ENCODE measurements at regions of chr11 and their contacts with region 1.

Region 1: GRCh38 chr11:7986768-7987559 is at the start of gene EIF3F:
- DNase-seq: peak; percentile 79 to 99 (median 88)
- ATAC-seq: peak; percentile 96
- H3K4me3 ChIP-seq: peak within 1 kb of the TSS; percentile 68 to 71
- H3K4me3 Mint-ChIP-seq: peak within 1 kb of the TSS; percentile 95
- H3K27ac ChIP-seq: peak within 1 kb of the TSS; percentile 57 to 84
- H3K27ac Mint-ChIP-seq: peak within 1 kb of the TSS; percentile 97
- H3K4me1 ChIP-seq: peaks cover 32% of the 10 kb centered on the region
- H3K4me1 Mint-ChIP-seq: peaks cover 50% of the 10 kb centered on the region
- H3K27me3 ChIP-seq: no peaks in the 10 kb centered on the region
- H3K27me3 Mint-ChIP-seq: no peaks in the 10 kb centered on the region
- CTCF ChIP-seq: peak; percentile 88
- total RNA-seq, gene EIF3F: 359 to 366 TPM

Region 2: GRCh38 chr11:7098235-7098832 is 888.6 kb before region 1 on chr11:
- CTCF ChIA-PET with region 1: interaction called, 3 read pairs
- POLR2A ChIA-PET with region 1: no interaction called
- intact Hi-C with region 1: loop called in 1 of 2 experiments (anchors 1 kb)
- DNase-seq: peak in 2 of 9 experiments; percentile 53 to 69
- ATAC-seq: no peak
- H3K4me3 ChIP-seq: no peak overlapping the region
- H3K4me3 Mint-ChIP-seq: no peak overlapping the region
- H3K27ac ChIP-seq: no peak overlapping the region
- H3K27ac Mint-ChIP-seq: no peak overlapping the region
- H3K4me1 ChIP-seq: no peaks in the 10 kb centered on the region
- H3K4me1 Mint-ChIP-seq: no peaks in the 10 kb centered on the region
- H3K27me3 ChIP-seq: no peaks in the 10 kb centered on the region
- H3K27me3 Mint-ChIP-seq: peaks cover 11% of the 10 kb centered on the region
- CTCF ChIP-seq: peak; percentile 63

Region 3: GRCh38 chr11:7892840-7893254 is 94.1 kb before region 1 on chr11:
- CTCF ChIA-PET with region 1: interaction called, 44 read pairs
- POLR2A ChIA-PET with region 1: interaction called, 5 read pairs
- intact Hi-C with region 1: loop called (anchors 1 kb)
- DNase-seq: peak in 2 of 9 experiments; percentile 39 to 61
- ATAC-seq: peak; percentile 70
- H3K4me3 ChIP-seq: no peak overlapping the region
- H3K4me3 Mint-ChIP-seq: no peak overlapping the region
- H3K27ac ChIP-seq: no peak overlapping the region
- H3K27ac Mint-ChIP-seq: no peak overlapping the region
- H3K4me1 ChIP-seq: no peaks in the 10 kb centered on the region
- H3K4me1 Mint-ChIP-seq: peaks cover 5% of the 10 kb centered on the region
- H3K27me3 ChIP-seq: no peaks in the 10 kb centered on the region
- H3K27me3 Mint-ChIP-seq: peaks cover 3% of the 10 kb centered on the region
- CTCF ChIP-seq: peak; percentile 56

Region 4: DNA sequence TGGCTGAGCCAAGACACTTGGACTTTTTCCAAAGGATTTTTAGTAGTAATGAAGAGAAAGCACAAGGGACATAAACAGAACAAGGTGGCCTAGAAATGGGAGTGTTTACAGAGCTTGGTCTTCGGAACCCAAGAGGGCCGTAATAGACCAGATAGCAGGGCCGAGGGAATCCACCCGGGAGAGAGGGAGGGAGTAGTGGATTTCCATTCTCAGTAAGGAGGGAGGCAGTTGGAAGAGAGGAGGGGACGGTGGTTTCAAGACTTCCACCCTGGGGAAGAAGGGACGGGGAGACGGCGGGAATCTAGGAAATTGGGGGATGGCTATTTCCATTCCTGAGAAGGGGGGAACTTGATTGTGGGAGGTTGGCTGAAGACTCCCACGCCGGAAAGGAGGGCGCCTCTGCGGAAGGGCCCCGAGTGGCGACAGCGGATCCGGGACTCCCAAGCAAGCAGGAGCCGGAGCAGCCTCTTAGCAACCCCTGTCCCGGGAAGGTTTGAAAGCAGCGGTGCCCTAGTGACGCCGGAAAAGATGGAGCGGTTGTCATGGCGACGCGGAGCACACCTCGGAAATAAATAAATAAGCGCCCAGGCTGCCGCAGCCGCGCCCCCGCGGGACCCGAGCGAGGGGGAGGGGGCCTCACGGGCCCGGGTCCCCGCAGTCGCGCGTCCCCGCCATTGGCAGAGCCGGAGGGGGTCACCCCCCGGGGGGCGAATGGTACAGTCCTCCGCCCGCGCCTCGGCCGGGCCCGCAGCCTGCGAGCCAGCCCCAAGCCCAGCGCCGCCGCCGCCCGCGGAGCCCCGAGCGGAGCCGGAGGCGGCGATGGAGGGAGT is 31.7 kb after region 1 on chr11:
- CTCF ChIA-PET with region 1: interaction called, 4 read pairs
- POLR2A ChIA-PET with region 1: interaction called, 7 read pairs
- intact Hi-C with region 1: loop called in 1 of 2 experiments (anchors 1 kb)
- DNase-seq: peak; percentile 43 to 93 (median 69)
- ATAC-seq: peak; percentile 69
- H3K4me3 ChIP-seq: peak overlapping the region; percentile 54 to 68
- H3K4me3 Mint-ChIP-seq: peak overlapping the region; percentile 81
- H3K27ac ChIP-seq: peak overlapping the region; percentile 39 to 60
- H3K27ac Mint-ChIP-seq: peak overlapping the region; percentile 13
- H3K4me1 ChIP-seq: peaks cover 12% of the 10 kb centered on the region
- H3K4me1 Mint-ChIP-seq: peaks cover 13% of the 10 kb centered on the region
- H3K27me3 ChIP-seq: peaks cover 11 to 17% of the 10 kb centered on the region in 2 experiments
- H3K27me3 Mint-ChIP-seq: peaks cover 34% of the 10 kb centered on the region
- CTCF ChIP-seq: no peak

Region 5: DNA sequence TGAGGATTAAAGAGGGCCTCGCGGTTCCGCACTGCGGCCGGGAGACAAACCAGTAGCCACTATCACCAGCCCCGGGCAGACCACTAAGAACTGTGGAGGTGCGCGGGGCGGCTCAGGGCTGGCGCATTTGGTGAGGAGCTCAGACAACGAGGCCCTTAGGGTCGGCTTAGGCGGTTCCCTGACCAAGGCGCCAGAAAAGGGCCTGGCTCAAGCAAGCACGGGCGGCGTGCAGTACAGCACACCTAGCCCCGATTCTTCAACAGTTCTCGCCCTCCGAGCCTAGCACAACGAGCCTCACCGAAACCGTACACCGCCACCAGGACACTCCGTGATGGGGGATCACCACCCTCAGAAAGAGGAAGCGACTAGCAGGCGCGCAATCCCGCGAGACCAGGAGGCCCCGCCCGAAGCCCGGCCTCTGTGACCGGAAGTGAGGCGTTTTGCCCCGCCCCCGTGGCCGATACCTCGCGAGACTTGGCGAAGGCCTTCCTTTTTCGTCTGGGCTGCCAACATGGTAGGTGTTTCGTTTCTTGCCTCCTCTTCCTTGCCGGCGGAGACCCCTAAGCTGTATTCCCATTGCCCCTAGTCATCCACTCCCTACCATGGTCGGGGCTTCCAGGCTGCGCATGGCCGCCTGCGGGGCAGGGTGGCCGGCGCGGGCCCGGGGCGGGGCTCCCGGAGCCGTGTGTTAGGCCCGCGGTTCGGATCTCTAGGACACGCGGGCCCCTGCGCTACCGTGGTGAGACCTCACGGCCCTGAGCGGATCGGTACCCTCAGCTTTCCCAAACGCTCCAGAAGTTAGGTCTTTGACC is 695.5 kb after region 1 on chr11 and contains the starts of genes RPL27A and TRIM66:
- CTCF ChIA-PET with region 1: no interaction called
- POLR2A ChIA-PET with region 1: interaction called, 5 read pairs
- intact Hi-C with region 1: loop called (anchors 1 to 2 kb)
- DNase-seq: peak; percentile 98 to 100 (median 99)
- ATAC-seq: peak; percentile 92
- H3K4me3 ChIP-seq: peak within 1 kb of the TSS; percentile 63 to 99
- H3K4me3 Mint-ChIP-seq: peak within 1 kb of the TSS; percentile 96
- H3K27ac ChIP-seq: peak within 1 kb of the TSS; percentile 82 to 92
- H3K27ac Mint-ChIP-seq: peak within 1 kb of the TSS; percentile 98
- H3K4me1 ChIP-seq: peaks cover 27% of the 10 kb centered on the region
- H3K4me1 Mint-ChIP-seq: peaks cover 48% of the 10 kb centered on the region
- H3K27me3 ChIP-seq: no peaks in the 10 kb centered on the region
- H3K27me3 Mint-ChIP-seq: no peaks in the 10 kb centered on the region
- CTCF ChIP-seq: no peak
- total RNA-seq, gene RPL27A: 1,595 to 1,676 TPM
- total RNA-seq, gene TRIM66: 8.6 to 9.1 TPM